Endothelial cell of umbilical vein (primary cell): ENCODE measurements at regions of chr1 and their contacts with region 1.

Region 1: GRCh38 chr1:43622471-43622870 is 27.5 kb upstream of the KDM4A start:
- DNase-seq: no peak
- H3K4me3 ChIP-seq: no peak overlapping the region
- H3K27ac ChIP-seq: no peak overlapping the region
- H3K4me1 ChIP-seq: no peaks in the 10 kb centered on the region
- H3K27me3 ChIP-seq: no peaks in the 10 kb centered on the region
- CTCF ChIP-seq: no peak
- POLR2A ChIP-seq: no peak

Region 2: DNA sequence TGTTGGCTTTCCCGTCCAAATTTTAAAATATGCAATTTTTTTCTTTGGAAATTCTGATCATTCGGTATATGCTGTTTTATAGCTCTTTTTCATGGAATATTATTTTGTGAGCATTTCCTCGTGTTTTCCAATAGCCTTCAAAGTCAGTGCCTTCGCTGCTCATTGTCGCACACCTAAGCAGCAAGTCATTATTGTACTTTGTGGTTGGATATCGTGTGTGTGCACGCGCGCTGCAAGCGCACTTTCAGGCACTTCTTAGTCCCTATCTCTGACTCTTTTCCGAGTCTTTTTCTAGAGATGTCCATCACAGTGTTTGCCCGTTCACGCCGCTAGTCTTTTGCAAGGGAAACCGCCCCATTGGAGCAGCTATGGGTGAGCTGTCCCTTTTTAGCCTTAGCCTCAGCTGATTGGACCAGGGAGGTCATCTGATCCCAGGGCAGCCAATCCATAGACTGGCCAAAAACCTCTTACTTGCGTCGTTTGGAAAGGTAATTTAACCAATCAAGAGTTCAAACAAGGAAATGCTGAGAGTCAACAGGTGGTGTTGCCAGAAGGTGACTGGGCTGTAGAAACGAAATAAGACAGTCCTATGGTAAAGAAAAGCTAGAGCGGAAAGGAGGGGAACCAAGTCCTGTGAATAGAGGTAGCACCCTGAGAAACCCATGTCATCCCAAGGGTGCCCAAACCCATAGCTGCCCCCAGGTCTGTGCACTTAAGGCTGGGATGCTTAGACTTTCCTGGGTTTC is 168.0 kb before region 1 on chr1:
- CTCF ChIA-PET with region 1: no interaction called
- POLR2A ChIA-PET with region 1: no interaction called
- dilution Hi-C with region 1: no loop called
- intact Hi-C with region 1: no loop called
- DNase-seq: peak; percentile 86
- H3K4me3 ChIP-seq: peak overlapping the region; percentile 19 to 72 (median 67)
- H3K27ac ChIP-seq: peak overlapping the region; percentile 55
- H3K4me1 ChIP-seq: peaks cover 43% of the 10 kb centered on the region
- H3K27me3 ChIP-seq: no peaks in the 10 kb centered on the region
- CTCF ChIP-seq: no peak
- POLR2A ChIP-seq: peak; percentile 88

Region 3: GRCh38 chr1:43582162-43582589 is 40.3 kb before region 1 on chr1:
- CTCF ChIA-PET with region 1: no interaction called
- POLR2A ChIA-PET with region 1: no interaction called
- dilution Hi-C with region 1: no loop called
- intact Hi-C with region 1: loop called (anchors 2 kb)
- DNase-seq: peak; percentile 89
- H3K4me3 ChIP-seq: no peak overlapping the region
- H3K27ac ChIP-seq: no peak overlapping the region
- H3K4me1 ChIP-seq: peaks cover 3% of the 10 kb centered on the region
- H3K27me3 ChIP-seq: no peaks in the 10 kb centered on the region
- CTCF ChIP-seq: no peak
- POLR2A ChIP-seq: no peak